Endothelial cell of umbilical vein (primary cell): ENCODE measurements at regions of chr20 and their contacts with region 1.

Region 1: DNA sequence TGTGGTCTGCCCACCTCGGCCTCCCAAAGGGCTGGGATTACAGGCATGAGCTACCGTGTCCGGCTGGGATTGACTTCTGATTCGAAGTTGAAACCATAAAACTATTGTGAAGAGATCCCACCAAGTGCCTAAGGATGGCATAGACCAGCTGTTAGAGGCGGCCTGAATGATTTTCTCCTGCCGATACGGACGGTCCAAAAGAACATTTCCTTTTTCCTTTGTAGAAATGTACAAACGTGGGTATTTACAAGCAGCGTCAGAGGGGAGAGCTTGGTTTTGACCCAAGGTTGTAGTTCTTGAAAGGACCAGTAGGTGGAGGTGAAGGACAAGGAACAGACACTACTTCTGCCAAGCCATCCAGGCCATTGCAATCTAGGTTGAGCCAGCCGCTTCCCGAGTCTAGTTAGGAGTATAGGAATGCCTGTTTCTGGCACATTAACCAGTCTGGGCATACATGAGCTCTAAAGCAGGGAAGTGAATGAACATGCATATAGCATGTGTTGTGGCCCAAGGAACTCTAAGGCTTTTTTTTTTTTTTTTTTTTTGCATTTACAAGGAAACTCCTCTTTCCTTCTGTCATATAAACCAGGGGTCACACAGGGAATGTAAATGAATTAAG is 29.1 kb downstream of the MOCS3 start:
- DNase-seq: peak; percentile 73
- H3K4me3 ChIP-seq: no peak overlapping the region
- H3K27ac ChIP-seq: no peak overlapping the region
- H3K4me1 ChIP-seq: no peaks in the 10 kb centered on the region
- H3K27me3 ChIP-seq: peaks cover 1 to 2% of the 10 kb centered on the region in 2 experiments
- CTCF ChIP-seq: peak; percentile 60 to 82
- POLR2A ChIP-seq: no peak

Region 2: DNA sequence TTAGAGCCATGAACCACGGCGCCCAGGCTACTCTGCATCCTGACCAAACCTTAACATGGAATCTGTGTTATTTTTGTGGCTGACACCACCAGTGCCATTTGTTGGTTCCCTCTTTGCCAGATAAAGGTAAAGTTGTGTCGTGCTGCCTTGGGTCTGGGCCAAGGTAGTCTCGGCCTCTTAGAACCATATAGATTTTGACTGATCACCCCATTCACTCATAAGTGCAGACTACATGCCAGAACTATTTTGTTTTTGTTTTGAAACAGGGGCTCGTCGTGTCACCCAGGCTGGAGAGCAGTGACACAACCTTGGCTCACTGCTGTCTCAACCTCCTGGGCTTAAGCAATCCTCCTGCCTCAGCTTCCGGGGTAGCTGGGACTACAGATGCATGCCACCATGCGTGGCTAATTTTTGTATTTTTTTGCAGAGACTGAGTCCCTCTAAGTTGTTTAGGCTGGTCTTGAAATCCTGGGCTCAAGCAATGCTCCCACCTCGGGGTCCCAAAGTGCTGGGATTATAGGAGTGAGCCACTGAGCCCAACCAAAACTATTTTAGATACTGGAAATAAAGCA is 277.1 kb before region 1 on chr20:
- CTCF ChIA-PET with region 1: no interaction called
- POLR2A ChIA-PET with region 1: no interaction called
- dilution Hi-C with region 1: no loop called
- intact Hi-C with region 1: no loop called
- DNase-seq: no peak
- H3K4me3 ChIP-seq: no peak overlapping the region
- H3K27ac ChIP-seq: no peak overlapping the region
- H3K4me1 ChIP-seq: no peaks in the 10 kb centered on the region
- H3K27me3 ChIP-seq: peaks cover 2 to 9% of the 10 kb centered on the region in 2 experiments
- CTCF ChIP-seq: no peak
- POLR2A ChIP-seq: no peak

Region 3: DNA sequence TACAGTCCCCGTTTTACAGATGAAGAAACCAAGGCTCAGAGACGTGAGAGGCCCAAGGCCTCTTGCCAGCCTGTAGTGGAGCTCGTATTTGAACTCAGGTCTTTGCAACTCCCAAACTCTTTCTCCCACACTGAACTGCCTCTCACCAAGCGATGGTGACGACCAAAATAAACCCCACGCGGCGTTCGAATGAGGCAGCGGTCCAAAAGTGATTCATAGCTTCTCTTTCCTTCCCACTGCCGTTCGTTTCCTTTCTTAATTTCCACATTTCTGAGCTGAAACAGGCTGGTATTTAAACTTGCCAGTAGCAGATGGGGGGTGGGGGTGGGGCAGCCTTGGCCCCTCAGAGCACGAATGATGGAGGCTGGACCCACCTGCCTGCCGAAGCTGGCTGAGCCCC is 288.1 kb after region 1 on chr20:
- CTCF ChIA-PET with region 1: interaction called, 11 read pairs
- POLR2A ChIA-PET with region 1: no interaction called
- dilution Hi-C with region 1: no loop called
- intact Hi-C with region 1: no loop called
- DNase-seq: peak; percentile 12
- H3K4me3 ChIP-seq: no peak overlapping the region
- H3K27ac ChIP-seq: no peak overlapping the region
- H3K4me1 ChIP-seq: no peaks in the 10 kb centered on the region
- H3K27me3 ChIP-seq: peaks cover 8 to 11% of the 10 kb centered on the region in 2 experiments
- CTCF ChIP-seq: no peak
- POLR2A ChIP-seq: no peak

Region 4: DNA sequence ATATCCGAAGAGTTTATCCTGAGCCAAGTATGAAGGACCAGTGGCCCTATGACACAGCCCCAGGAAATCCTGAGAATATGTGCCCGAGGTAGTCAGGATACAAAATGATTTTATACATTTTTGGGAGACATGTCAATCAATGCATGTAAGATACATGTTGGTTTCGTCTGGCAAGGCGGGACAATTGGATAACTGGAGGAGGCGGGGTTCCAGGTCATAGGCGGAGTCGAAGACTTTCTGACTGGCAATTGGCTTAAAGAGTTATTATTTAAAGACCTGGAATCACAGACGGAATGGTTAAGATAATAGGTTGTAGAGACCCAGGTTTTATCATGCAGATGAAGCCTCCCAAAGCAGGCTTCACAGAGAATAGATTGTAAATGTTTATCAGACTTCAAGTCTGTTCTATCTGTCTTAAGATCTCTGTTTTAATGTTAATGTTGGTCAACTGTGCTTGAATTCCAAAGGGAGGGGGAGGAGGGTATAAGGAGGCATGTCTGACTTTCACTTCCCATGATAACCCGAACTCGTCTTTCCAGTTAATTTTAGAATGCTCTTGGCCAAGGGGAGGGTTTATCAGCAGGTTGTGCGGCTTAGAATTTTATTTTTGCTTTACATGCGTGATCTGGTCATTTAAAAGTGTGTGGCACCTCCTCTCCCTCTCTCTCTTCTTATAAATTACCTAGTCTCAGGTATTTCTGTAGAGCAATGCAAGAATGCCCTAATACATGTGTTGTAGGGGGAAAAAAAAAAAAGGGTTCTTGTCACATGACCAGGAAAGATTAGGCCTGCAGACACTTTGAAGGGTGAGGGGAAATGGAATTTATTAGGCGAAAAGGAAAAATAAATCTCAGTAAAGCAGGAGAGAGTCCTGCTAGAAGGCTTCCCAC is 324.1 kb after region 1 on chr20:
- CTCF ChIA-PET with region 1: interaction called, 311 read pairs
- POLR2A ChIA-PET with region 1: no interaction called
- dilution Hi-C with region 1: no loop called
- intact Hi-C with region 1: no loop called
- DNase-seq: no peak
- H3K4me3 ChIP-seq: no peak overlapping the region
- H3K27ac ChIP-seq: no peak overlapping the region
- H3K4me1 ChIP-seq: no peaks in the 10 kb centered on the region
- H3K27me3 ChIP-seq: peaks cover 0 to 2% of the 10 kb centered on the region in 2 experiments
- CTCF ChIP-seq: no peak
- POLR2A ChIP-seq: no peak

Region 5: GRCh38 chr20:51354769-51355319 is 367.1 kb after region 1 on chr20:
- CTCF ChIA-PET with region 1: interaction called, 18 read pairs
- POLR2A ChIA-PET with region 1: no interaction called
- dilution Hi-C with region 1: no loop called
- intact Hi-C with region 1: no loop called
- DNase-seq: peak; percentile 56
- H3K4me3 ChIP-seq: no peak overlapping the region
- H3K27ac ChIP-seq: peak overlapping the region; percentile 79
- H3K4me1 ChIP-seq: peaks cover 36% of the 10 kb centered on the region
- H3K27me3 ChIP-seq: no peaks in the 10 kb centered on the region
- CTCF ChIP-seq: no peak
- POLR2A ChIP-seq: no peak

Region 6: GRCh38 chr20:51624157-51624731 is 636.5 kb after region 1 on chr20:
- CTCF ChIA-PET with region 1: interaction called, 26 read pairs
- POLR2A ChIA-PET with region 1: no interaction called
- dilution Hi-C with region 1: no loop called
- intact Hi-C with region 1: loop called (anchors 1 kb)
- DNase-seq: peak; percentile 81
- H3K4me3 ChIP-seq: no peak overlapping the region
- H3K27ac ChIP-seq: peak overlapping the region; percentile 41
- H3K4me1 ChIP-seq: peaks cover 14% of the 10 kb centered on the region
- H3K27me3 ChIP-seq: no peaks in the 10 kb centered on the region
- CTCF ChIP-seq: peak; percentile 82 to 84
- POLR2A ChIP-seq: no peak

Region 7: GRCh38 chr20:52150440-52151258 is 1162.9 kb after region 1 on chr20:
- CTCF ChIA-PET with region 1: interaction called, 10 read pairs
- POLR2A ChIA-PET with region 1: no interaction called
- dilution Hi-C with region 1: no loop called
- intact Hi-C with region 1: no loop called
- DNase-seq: peak; percentile 72
- H3K4me3 ChIP-seq: no peak overlapping the region
- H3K27ac ChIP-seq: no peak overlapping the region
- H3K4me1 ChIP-seq: no peaks in the 10 kb centered on the region
- H3K27me3 ChIP-seq: no peaks in the 10 kb centered on the region
- CTCF ChIP-seq: peak; percentile 61 to 73
- POLR2A ChIP-seq: no peak